ENCODE measurements at regions of chr14 and their contacts with region 1.

Region 1: DNA sequence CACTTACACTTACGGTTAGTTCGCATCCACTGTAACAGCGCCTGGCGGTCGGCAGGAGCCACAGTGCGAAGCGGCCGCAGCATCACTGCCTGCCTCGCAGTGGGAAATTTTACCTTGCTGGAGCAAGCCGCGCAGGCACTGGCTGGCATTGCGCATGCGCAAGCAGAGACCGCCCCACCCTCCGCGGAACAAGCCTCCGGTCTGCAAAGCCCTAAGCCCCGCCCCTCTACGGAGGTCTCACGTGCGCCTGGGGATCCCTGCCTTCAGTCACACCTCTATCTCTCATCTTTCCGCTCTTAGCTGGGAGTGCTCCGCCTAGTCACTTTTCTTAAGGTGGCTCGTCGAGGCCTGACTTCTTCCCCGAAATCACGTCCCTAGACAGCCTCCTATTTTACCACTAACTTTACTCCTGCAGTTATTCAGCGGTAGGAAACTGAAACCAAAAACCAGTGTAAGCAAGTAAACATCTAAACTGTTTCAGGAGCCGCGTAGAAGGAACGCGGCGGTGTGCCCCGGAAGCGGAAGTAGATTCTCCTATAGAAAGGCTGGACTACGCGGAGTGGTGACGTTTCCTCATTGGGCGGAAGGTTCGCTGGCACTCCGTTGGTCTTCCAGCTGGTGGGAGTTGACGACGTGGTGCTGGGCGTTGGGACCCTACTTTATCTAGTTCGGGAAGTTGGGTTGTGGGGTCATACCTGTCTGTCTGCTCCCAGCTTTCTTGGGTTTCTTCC is at the start of gene SRP54:
- DNase-seq: peak; percentile 100
- H3K4me3 Mint-ChIP-seq: no peak within 1 kb of the TSS
- H3K27ac Mint-ChIP-seq: no peak within 1 kb of the TSS
- H3K4me1 Mint-ChIP-seq: peaks cover 38% of the 10 kb centered on the region
- H3K27me3 Mint-ChIP-seq: no peaks in the 10 kb centered on the region
- total RNA-seq, gene SRP54: 66.5 to 72.6 TPM

Region 2: DNA sequence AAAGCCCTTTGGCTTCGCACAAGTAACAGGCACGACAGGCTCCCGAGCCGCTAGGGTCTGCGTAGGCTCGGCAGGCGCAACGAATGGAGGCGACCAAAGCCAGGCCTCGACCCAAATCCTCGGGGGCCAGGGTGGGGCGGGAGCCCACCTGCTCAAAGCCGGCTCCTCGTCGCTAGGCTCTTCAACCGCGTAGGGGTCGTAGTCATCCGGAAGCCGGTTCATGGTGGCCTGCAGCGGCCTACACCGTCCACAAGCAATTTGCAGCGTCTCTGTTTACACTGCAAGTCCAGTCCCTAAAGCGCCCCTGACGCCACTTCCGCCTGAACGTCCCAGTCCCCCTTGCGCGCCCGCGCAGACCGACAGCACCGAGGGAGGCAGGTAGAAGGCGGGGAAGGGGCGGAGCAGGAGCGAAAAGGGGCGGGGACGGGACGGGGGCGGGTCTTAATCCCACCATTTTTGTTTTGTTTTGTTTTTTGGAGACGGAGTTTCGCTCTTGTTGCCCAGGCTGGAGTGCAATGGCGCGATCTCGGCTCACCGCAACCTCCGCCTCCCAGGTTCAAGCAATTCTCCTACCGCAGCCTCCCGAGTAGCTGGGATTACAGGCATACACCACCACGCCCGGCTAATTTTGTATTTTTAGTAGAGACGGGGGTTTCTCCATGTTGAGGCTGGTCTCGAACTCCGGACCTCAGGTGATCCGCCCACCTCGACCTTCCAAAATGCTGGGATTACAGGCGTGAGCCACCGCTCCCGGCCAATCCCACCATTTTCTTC is 443.0 kb before region 1 on chr14 and contains the start of gene EAPP:
- CTCF ChIA-PET with region 1: no interaction called
- intact Hi-C with region 1: loop called (anchors 10 kb)
- DNase-seq: peak; percentile 98
- H3K4me3 Mint-ChIP-seq: peak within 1 kb of the TSS; percentile 95
- H3K27ac Mint-ChIP-seq: peak within 1 kb of the TSS; percentile 98
- H3K4me1 Mint-ChIP-seq: peaks cover 32% of the 10 kb centered on the region
- H3K27me3 Mint-ChIP-seq: no peaks in the 10 kb centered on the region
- total RNA-seq, gene EAPP: 34.0 to 35.4 TPM

Region 3: DNA sequence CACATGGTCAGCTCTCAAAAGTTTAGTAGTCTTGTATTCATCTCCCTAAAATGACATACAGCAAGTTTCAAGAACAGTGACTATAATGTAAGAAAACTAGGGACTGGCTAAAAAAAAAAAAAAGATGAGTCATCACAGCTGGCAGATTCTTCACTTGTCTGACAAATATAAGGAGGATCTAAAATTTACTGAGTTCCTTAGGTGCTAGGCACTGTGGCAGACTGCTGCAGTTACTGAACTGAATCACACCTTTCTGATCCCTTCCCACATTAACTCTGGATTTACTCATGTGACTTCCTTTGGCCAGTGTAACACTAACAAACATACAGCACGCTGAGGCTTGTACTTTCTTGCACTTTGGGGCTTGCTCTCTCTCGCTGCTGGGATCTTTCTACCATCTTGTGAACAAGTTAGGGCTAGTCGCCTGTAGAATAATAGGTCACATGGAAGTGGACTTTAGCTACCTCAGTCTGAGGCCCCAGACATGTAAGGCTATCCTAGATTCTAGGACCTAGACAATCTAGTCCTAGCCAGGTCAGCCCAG is 139.5 kb before region 1 on chr14:
- CTCF ChIA-PET with region 1: no interaction called
- intact Hi-C with region 1: loop called (anchors 1 kb)
- DNase-seq: peak; percentile 59
- H3K4me3 Mint-ChIP-seq: no peak overlapping the region
- H3K27ac Mint-ChIP-seq: peak overlapping the region; percentile 89
- H3K4me1 Mint-ChIP-seq: peaks cover 30% of the 10 kb centered on the region
- H3K27me3 Mint-ChIP-seq: no peaks in the 10 kb centered on the region

Region 4: DNA sequence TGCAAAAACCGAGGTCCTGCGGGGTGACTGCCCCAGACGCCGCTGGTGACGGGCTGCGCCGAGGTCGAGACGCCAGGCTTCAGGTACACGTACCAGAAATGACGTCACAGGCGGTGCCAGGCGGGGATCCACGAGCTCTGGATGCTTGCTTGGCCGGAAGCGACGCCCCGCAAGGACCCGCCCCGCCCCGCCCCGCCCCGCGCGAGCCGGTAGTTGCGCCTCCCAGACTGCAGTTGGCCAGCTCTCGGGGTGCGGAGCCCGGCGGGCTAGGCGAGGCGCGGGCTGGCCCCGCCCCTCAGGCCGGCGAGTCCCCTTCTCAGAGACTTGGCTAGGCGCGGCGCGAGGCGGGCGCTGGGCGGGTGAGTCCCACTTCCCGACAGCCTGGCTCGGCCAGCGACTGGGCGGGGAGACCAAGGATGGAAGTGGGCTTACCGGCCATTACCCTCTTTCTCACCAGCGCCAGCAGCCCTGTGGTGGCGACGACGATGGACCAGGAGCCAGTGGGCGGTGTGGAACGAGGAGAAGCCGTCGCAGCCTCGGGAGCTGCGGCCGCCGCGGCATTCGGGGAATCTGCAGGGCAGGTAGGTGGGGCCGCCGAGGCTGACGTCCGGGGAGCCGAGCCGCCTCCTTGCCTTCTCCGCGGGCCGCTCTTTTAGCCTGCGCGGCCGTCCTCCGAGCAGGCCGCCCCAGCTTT is 63.6 kb after region 1 on chr14 and contains the start of gene FAM177A1:
- CTCF ChIA-PET with region 1: interaction called, 4 read pairs
- intact Hi-C with region 1: loop called (anchors 1 kb)
- DNase-seq: peak; percentile 99
- H3K4me3 Mint-ChIP-seq: peak within 1 kb of the TSS; percentile 89
- H3K27ac Mint-ChIP-seq: peak within 1 kb of the TSS; percentile 98
- H3K4me1 Mint-ChIP-seq: peaks cover 25% of the 10 kb centered on the region
- H3K27me3 Mint-ChIP-seq: no peaks in the 10 kb centered on the region
- total RNA-seq, gene FAM177A1: 55.0 to 58.5 TPM

Region 5: DNA sequence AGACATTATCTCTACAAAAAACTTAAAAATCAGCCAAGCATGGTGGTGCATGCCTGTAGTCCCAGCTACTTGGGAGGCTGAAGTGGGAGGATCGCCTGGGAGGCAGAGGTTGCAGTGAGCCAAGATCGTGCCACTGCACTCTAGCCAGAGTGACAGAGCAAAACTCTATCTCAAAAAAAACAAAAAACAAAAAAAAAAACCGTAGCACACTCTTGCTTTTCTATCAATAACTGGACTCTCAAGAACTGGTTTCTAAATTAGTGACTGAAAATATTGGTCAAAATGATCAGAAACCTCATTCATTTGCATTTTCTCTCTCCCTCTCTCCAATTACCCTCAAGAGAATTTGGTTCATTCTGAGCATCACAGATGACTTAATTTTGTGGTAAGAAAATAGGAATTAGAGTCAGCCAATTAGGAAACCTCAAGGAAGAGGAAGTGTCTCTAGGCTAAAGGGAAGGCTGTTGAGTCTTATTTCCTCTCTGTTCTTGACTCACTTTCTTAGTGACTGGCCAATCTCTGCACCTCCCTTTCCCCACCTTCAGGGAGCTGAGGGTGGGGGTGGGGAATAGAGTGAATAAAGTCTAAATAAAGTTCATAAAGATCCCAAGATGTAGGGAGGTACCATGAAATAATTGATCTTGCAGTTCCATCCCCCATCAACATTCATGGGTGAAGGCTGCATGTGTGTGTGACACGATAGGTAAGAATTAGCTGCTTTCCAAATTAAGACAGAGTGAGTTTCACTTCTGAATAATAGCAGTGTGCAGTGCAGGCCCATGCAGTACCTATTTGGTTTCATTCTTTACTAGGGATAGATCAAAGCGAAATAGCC is 302.8 kb after region 1 on chr14:
- CTCF ChIA-PET with region 1: no interaction called
- intact Hi-C with region 1: loop called (anchors 1 kb)
- DNase-seq: peak; percentile 47
- H3K4me3 Mint-ChIP-seq: peak overlapping the region; percentile 35
- H3K27ac Mint-ChIP-seq: peak overlapping the region; percentile 96
- H3K4me1 Mint-ChIP-seq: peaks cover 55% of the 10 kb centered on the region
- H3K27me3 Mint-ChIP-seq: no peaks in the 10 kb centered on the region

Region 6: GRCh38 chr14:35526962-35527361 is 544.4 kb after region 1 on chr14:
- CTCF ChIA-PET with region 1: no interaction called
- intact Hi-C with region 1: no loop called
- DNase-seq: no peak
- H3K4me3 Mint-ChIP-seq: no peak overlapping the region
- H3K27ac Mint-ChIP-seq: no peak overlapping the region
- H3K4me1 Mint-ChIP-seq: no peaks in the 10 kb centered on the region
- H3K27me3 Mint-ChIP-seq: peaks cover 37% of the 10 kb centered on the region

Region 7: GRCh38 chr14:35808076-35808652 is 825.6 kb after region 1 on chr14:
- CTCF ChIA-PET with region 1: no interaction called
- intact Hi-C with region 1: loop called (anchors 1 kb)
- DNase-seq: peak; percentile 61
- H3K4me3 Mint-ChIP-seq: peak overlapping the region; percentile 98
- H3K27ac Mint-ChIP-seq: peak overlapping the region; percentile 86
- H3K4me1 Mint-ChIP-seq: peaks cover 28% of the 10 kb centered on the region
- H3K27me3 Mint-ChIP-seq: no peaks in the 10 kb centered on the region